Activated CD4-positive, alpha-beta T cell treated with anti-CD3 and anti-CD28 coated beads for 36 hours (primary cell): ENCODE measurements at regions of chr1 and their contacts with region 1.

Region 1: GRCh38 chr1:25022361-25023189 is 92.5 kb upstream of the RUNX3 start:
- DNase-seq: peak; percentile 97
- ATAC-seq: peak; percentile 84
- H3K4me3 Mint-ChIP-seq: peak overlapping the region; percentile 77
- H3K27ac Mint-ChIP-seq: peak overlapping the region; percentile 99
- H3K4me1 Mint-ChIP-seq: peaks cover 92% of the 10 kb centered on the region
- H3K27me3 Mint-ChIP-seq: no peaks in the 10 kb centered on the region

Region 2: GRCh38 chr1:24919791-24920532 is 102.6 kb before region 1 on chr1:
- CTCF ChIA-PET with region 1: no interaction called
- POLR2A ChIA-PET with region 1: interaction called, 10 read pairs
- intact Hi-C with region 1: loop called in 1 of 2 experiments (anchors 1 kb)
- DNase-seq: peak; percentile 90
- ATAC-seq: peak; percentile 38
- H3K4me3 Mint-ChIP-seq: peak overlapping the region; percentile 54
- H3K27ac Mint-ChIP-seq: peak overlapping the region; percentile 97
- H3K4me1 Mint-ChIP-seq: peaks cover 69% of the 10 kb centered on the region
- H3K27me3 Mint-ChIP-seq: no peaks in the 10 kb centered on the region

Region 3: DNA sequence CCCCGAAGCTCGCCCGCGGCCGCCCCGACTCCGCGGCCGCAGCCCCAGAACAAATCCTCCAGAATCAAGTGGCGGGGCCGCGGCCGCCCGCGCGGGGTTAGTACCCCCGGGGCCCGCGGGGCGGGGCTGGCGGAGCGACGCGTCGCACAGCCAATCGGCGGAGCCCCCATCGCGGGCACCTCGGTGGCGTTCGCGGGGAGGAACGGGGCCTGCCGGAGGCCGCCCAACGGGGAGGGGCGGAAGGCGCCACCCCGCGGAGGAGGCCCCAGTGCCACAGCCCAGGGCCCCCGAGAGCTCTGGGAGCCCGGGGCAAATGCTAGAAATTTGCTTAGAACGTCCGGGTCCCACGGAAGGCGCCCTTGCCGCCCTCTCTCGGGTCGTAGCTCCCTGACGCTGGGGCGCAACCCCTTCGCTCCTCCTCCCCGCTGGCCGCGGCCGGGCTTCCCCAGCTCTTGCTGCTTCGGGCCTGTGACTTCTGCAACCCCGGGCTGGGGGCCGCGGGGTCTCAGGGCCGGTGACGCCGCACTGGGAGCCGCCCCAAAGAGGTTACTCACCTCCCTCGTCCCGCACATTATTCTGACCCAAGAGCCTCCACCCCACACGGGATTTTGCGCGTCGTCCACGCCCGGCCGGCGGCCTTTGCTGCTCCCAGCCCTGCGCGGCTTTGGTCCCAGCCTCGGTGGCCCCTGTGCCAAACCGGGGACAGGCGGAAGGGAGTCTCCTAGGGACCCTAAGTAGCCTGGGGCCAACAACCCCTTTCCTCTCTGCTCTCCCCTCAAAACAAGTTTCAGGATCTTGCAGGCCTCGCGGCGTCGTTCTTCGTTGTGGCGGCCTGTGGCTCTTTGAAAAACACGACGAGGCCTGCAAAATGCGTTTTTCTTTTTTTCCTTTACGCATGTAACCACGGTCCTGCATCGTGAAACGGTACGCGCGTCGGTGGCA is 92.1 kb before region 1 on chr1 and contains the start of gene RUNX3:
- CTCF ChIA-PET with region 1: interaction called, 9 read pairs
- POLR2A ChIA-PET with region 1: interaction called, 10 read pairs
- intact Hi-C with region 1: loop called in 1 of 2 experiments (anchors 1 kb)
- DNase-seq: peak; percentile 96
- ATAC-seq: peak; percentile 88
- H3K4me3 Mint-ChIP-seq: peak within 1 kb of the TSS; percentile 80
- H3K27ac Mint-ChIP-seq: peak within 1 kb of the TSS; percentile 91
- H3K4me1 Mint-ChIP-seq: peaks cover 66% of the 10 kb centered on the region
- H3K27me3 Mint-ChIP-seq: no peaks in the 10 kb centered on the region
- total RNA-seq, gene RUNX3: 156 to 167 TPM

Region 4: DNA sequence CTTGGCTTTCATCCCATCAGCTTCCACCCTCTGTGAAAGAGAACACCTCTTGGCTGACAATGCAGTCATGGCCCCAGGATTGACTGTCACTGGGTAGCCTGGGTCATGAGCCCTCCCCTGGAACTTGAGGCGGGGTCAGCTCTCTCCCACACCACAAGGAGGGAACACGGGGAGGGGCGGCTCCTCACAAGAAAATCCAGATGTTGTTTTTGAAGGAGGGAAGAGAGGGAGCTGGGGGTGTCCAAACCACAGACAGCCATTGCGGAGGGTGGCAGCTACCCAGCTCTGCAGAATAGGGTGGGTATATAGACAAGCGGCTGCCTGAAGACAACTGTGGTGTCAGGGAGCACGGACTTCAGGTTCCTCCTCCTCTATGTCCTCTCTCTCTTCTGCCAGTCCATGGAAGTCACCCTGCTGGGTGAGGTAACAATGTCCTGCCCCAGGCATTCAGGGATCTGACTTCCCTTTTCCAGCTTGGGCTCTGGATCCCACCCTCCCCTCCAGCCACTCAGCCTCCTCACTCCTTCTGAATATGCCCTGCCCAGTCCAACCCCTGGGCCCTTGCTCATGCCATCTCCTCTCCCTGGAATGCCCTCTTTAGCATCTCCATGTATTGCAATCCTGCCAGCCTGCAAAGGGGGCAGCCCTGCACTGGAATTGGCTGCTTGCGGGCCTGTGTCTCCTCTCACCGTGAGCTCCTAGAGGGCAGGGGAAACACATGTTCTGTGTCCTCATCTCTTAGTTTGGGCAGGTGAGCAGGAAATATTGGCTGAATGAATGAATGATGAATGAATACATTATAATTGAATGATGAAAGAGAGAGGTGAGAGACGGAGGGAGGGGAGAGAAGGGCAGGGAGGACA is 31.6 kb before region 1 on chr1:
- CTCF ChIA-PET with region 1: interaction called, 4 read pairs
- POLR2A ChIA-PET with region 1: no interaction called
- intact Hi-C with region 1: loop called (anchors 1 to 2 kb)
- DNase-seq: peak; percentile 48
- ATAC-seq: peak; percentile 34
- H3K4me3 Mint-ChIP-seq: peak overlapping the region; percentile 50
- H3K27ac Mint-ChIP-seq: peak overlapping the region; percentile 100
- H3K4me1 Mint-ChIP-seq: peaks cover 86% of the 10 kb centered on the region
- H3K27me3 Mint-ChIP-seq: no peaks in the 10 kb centered on the region

Region 5: GRCh38 chr1:25037174-25038074 is 14.8 kb after region 1 on chr1:
- CTCF ChIA-PET with region 1: interaction called, 20 read pairs
- POLR2A ChIA-PET with region 1: interaction called, 3 read pairs
- intact Hi-C with region 1: loop called in 1 of 2 experiments (anchors 2 kb)
- DNase-seq: peak; percentile 86
- ATAC-seq: peak; percentile 55
- H3K4me3 Mint-ChIP-seq: no peak overlapping the region
- H3K27ac Mint-ChIP-seq: peak overlapping the region; percentile 27
- H3K4me1 Mint-ChIP-seq: peaks cover 35% of the 10 kb centered on the region
- H3K27me3 Mint-ChIP-seq: no peaks in the 10 kb centered on the region